ENCODE measurements at regions of chr10 and their contacts with region 1.

Region 1: GRCh38 chr10:121900443-121901174 is 27.2 kb downstream of the ATE1 start:
- DNase-seq: peak; percentile 19
- H3K4me3 ChIP-seq: no peak overlapping the region
- CTCF ChIP-seq: peak; percentile 59

Region 2: DNA sequence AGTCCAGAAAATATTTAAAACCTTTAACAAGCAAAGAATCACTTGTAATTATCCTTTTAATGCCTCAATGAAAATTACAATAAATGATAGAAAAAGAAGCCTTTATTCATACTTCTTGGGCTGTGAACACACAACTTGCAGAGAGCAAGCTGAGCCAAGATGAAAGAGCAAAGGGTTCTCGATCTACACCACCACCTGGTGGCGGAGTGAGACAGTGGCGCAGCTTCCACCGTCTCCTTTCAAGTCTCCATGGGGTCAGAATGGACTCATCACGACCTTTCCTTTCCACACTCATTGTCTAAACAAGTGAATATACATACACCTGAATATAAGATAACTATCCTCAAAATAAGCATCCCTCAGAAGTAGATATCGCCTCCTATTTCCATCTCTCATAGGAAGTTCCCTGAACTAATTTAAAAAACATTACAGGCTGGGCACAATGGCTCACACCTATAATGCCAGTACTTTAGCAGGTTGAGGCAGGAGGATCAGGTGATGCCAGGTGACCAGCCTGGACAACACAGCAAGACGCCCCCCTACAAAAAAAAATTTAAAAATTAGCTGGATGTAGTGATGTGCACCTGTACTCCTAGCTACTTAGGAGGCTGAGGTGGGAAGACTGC is 13.5 kb before region 1 on chr10:
- CTCF ChIA-PET with region 1: interaction called, 77 read pairs
- POLR2A ChIA-PET with region 1: no interaction called
- DNase-seq: peak; percentile 24
- H3K4me3 ChIP-seq: no peak overlapping the region
- CTCF ChIP-seq: peak; percentile 88

Region 3: GRCh38 chr10:121910673-121911420 is 10.2 kb after region 1 on chr10:
- CTCF ChIA-PET with region 1: interaction called, 17 read pairs
- POLR2A ChIA-PET with region 1: no interaction called
- DNase-seq: peak; percentile 3
- H3K4me3 ChIP-seq: no peak overlapping the region
- CTCF ChIP-seq: no peak

Region 4: DNA sequence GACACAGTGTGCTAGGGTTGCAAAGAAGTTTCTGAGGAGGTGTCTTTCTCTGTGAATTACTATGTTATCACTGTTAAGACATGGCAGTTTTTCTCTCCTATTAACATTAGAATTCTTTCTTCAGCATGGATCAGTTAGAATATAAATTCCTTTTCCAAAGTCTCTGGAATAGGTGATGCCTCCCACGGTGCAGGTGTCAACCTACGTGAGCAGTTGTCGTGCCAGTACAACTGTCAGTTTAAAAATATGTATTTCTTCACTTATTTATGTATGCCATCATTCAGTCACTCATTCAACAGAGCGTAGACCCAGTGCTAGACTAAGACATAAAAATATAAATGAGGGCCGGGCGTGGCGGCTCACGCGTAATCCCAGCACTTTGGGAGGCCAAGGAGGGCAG is 171.9 kb after region 1 on chr10:
- CTCF ChIA-PET with region 1: no interaction called
- POLR2A ChIA-PET with region 1: no interaction called
- DNase-seq: no peak
- H3K4me3 ChIP-seq: no peak overlapping the region
- CTCF ChIP-seq: no peak

Region 5: GRCh38 chr10:122191936-122192541 is 291.4 kb after region 1 on chr10:
- CTCF ChIA-PET with region 1: no interaction called
- POLR2A ChIA-PET with region 1: no interaction called
- DNase-seq: no peak
- H3K4me3 ChIP-seq: no peak overlapping the region
- CTCF ChIP-seq: no peak